Activated B cell treated with CpG ODN at 0.5 μM for 24 hours (primary cell): ENCODE measurements at regions of chr10 and their contacts with region 1.

Region 1: DNA sequence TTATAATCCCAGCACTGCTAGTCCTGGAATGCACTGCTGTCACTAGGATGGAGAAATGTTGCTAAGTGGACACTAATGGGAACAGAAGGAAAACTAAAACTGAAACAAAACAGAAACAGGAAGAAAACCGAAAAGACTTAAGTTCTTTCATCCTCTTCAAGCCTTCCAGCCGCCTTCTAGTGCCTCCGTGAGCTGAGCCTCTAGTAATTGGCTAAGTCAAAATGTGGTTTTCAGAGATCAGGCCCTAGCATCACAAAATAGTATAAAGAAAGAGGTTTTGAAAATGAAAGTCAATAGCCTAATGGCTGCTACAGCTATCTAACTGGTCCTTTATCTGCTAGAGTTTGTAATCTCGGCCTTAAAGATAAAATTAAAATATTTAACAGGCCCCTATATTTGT is 253.9 kb upstream of the SORCS1 start:
- DNase-seq: no peak
- ATAC-seq: no peak
- H3K4me3 Mint-ChIP-seq: no peak overlapping the region
- H3K27ac Mint-ChIP-seq: peak overlapping the region; percentile 56
- H3K4me1 Mint-ChIP-seq: peaks cover 16% of the 10 kb centered on the region
- H3K27me3 Mint-ChIP-seq: no peaks in the 10 kb centered on the region
- CTCF ChIP-seq: no peak

Region 2: GRCh38 chr10:106980495-106981451 is 437.6 kb before region 1 on chr10:
- CTCF ChIA-PET with region 1: no interaction called
- POLR2A ChIA-PET with region 1: no interaction called
- intact Hi-C with region 1: no loop called
- DNase-seq: no peak
- ATAC-seq: no peak
- H3K4me3 Mint-ChIP-seq: no peak overlapping the region
- H3K27ac Mint-ChIP-seq: no peak overlapping the region
- H3K4me1 Mint-ChIP-seq: no peaks in the 10 kb centered on the region
- H3K27me3 Mint-ChIP-seq: no peaks in the 10 kb centered on the region
- CTCF ChIP-seq: no peak

Region 3: GRCh38 chr10:107477266-107477665 is 58.9 kb after region 1 on chr10:
- CTCF ChIA-PET with region 1: no interaction called
- POLR2A ChIA-PET with region 1: no interaction called
- intact Hi-C with region 1: loop called (anchors 5 kb)
- DNase-seq: no peak
- ATAC-seq: peak; percentile 65
- H3K4me3 Mint-ChIP-seq: peak overlapping the region; percentile 65
- H3K27ac Mint-ChIP-seq: peak overlapping the region; percentile 74
- H3K4me1 Mint-ChIP-seq: peaks cover 9% of the 10 kb centered on the region
- H3K27me3 Mint-ChIP-seq: no peaks in the 10 kb centered on the region
- CTCF ChIP-seq: no peak

Region 4: DNA sequence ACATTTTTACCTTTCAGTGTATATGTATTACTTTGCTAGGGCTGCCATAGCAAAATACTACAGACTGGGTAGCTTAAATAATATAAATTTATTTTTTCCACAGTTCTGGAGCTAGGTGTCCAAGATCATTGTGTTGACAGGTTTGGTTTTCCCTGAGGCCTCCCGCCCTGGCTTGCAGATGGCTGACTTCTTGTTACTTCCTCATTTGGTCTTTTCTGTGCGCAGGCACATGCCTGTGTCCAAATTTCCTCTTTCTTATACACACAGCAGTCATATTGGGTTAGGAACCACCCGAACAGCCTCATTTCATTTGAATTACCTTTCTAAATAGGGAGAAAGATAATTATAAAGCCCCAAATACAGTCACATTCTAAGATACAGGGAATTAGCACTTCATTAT is 267.7 kb after region 1 on chr10:
- CTCF ChIA-PET with region 1: no interaction called
- POLR2A ChIA-PET with region 1: no interaction called
- intact Hi-C with region 1: loop called (anchors 10 kb)
- DNase-seq: no peak
- ATAC-seq: peak; percentile 85
- H3K4me3 Mint-ChIP-seq: no peak overlapping the region
- H3K27ac Mint-ChIP-seq: peak overlapping the region; percentile 51
- H3K4me1 Mint-ChIP-seq: peaks cover 19% of the 10 kb centered on the region
- H3K27me3 Mint-ChIP-seq: no peaks in the 10 kb centered on the region
- CTCF ChIP-seq: no peak